Adrenal gland (tissue), 19 donors: ENCODE measurements at regions of chr4 and their contacts with region 1.

Region 1: DNA sequence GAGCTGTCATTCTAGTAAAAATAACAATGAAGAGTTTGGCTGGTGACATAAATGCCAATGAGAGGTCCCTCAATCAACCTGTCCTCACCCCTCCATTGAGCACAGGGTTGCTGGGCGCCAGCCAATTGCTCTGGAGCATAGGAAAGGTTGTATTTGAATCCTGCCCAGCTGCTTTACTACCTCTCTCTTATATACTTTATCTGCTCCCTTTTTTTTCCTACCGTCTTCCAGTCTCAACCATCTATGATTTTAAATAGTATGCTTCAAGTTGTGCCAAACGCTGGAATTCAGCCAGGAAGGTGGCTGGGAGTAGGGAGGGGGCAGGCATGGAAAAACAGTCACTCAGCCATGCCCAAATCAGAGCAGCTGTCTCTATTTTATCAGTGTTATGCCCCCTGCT is 153.8 kb downstream of the NR3C2 start:
- DNase-seq: peak in 3 of 7 donors; percentile 18 to 43 (median 25)
- H3K4me3 ChIP-seq: no peak overlapping the region
- H3K27ac ChIP-seq: no peak overlapping the region
- H3K4me1 ChIP-seq: peaks cover 0 to 13% of the 10 kb centered on the region in 2 donors
- H3K27me3 ChIP-seq: no peaks in the 10 kb centered on the region
- CTCF ChIP-seq: no peak
- POLR2A ChIP-seq: no peak

Region 2: GRCh38 chr4:148441986-148442831 is 153.8 kb after region 1 on chr4 and contains the start of gene NR3C2:
- intact Hi-C with region 1: loop called (anchors 10 kb)
- DNase-seq: peak; percentile 99 to 100 (median 100)
- H3K4me3 ChIP-seq: peak within 1 kb of the TSS; percentile 28 to 87 (median 79)
- H3K27ac ChIP-seq: peak within 1 kb of the TSS; percentile 3 to 90 (median 78)
- H3K4me1 ChIP-seq: peaks cover 0 to 36% of the 10 kb centered on the region in 2 donors
- H3K27me3 ChIP-seq: no peaks in the 10 kb centered on the region
- CTCF ChIP-seq: peak in 2 of 6 experiments; percentile 18 to 24
- POLR2A ChIP-seq: peak; percentile 99 to 100
- total RNA-seq, gene NR3C2: 1.1 to 19.8 (median 13.6) TPM